Astrocyte of the cerebellum (primary cell): ENCODE measurements at regions of chr5 and their contacts with region 1.

Region 1: DNA sequence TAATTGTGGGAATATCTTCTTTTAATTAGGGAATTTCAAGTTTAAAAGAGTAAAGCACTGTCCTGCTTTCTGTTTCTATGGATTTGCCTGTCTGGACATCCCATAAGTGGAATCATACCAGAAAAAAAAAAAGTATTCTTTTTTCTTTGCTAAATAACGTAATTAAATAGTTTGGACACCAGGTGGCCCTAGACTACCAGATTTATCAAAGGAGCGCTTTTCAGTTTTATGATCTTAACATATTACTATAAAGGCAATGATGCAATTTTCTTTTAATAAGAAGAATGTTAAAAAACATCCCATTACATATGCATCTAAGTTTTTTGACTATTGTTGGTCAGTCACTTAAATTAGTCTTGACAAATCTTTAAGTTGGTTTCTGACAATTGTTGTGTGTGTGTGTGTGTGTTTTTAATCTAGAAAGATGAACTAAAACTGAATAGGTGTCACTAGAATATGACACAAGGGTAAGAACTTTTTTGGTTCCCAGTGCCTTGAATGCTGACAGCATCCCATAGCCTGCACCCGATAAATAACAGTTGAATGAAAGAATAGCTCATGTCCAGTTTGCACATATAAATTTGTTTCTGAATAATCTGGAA is 49.5 kb downstream of the C5orf22 start:
- DNase-seq: peak; percentile 42
- H3K4me3 ChIP-seq: no peak overlapping the region
- CTCF ChIP-seq: no peak

Region 2: DNA sequence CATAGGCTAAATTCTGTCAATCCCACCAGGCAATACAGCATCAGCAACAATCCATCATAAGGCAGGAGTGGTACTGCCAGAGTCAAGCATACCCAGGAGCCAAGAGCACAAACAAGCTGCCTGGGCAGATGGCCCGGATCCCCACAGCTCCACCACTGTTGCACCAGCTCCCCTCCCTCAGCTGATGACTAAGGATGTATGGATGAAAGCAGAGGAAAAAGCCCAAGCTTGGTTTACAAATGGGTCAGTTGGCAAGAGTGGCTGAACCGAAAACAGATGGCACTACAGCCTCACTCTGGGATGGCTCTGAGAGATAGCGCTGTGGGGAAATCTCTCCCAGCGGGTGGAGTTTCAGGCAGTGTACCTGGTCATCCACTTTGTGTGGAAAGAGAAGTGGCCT is 79.1 kb before region 1 on chr5:
- in situ Hi-C with region 1: no loop called
- DNase-seq: no peak
- H3K4me3 ChIP-seq: no peak overlapping the region
- CTCF ChIP-seq: no peak

Region 3: GRCh38 chr5:31531543-31531887 is 50.1 kb before region 1 on chr5:
- in situ Hi-C with region 1: no loop called
- DNase-seq: no peak
- H3K4me3 ChIP-seq: peak overlapping the region; percentile 70
- CTCF ChIP-seq: no peak

Region 4: GRCh38 chr5:31617867-31618266 is 36.3 kb after region 1 on chr5:
- in situ Hi-C with region 1: no loop called
- DNase-seq: no peak
- H3K4me3 ChIP-seq: no peak overlapping the region
- CTCF ChIP-seq: no peak

Region 5: GRCh38 chr5:31809050-31809870 is 227.7 kb after region 1 on chr5:
- in situ Hi-C with region 1: loop called (anchors 25 kb)
- DNase-seq: peak; percentile 66
- H3K4me3 ChIP-seq: no peak overlapping the region
- CTCF ChIP-seq: peak; percentile 80

Region 6: DNA sequence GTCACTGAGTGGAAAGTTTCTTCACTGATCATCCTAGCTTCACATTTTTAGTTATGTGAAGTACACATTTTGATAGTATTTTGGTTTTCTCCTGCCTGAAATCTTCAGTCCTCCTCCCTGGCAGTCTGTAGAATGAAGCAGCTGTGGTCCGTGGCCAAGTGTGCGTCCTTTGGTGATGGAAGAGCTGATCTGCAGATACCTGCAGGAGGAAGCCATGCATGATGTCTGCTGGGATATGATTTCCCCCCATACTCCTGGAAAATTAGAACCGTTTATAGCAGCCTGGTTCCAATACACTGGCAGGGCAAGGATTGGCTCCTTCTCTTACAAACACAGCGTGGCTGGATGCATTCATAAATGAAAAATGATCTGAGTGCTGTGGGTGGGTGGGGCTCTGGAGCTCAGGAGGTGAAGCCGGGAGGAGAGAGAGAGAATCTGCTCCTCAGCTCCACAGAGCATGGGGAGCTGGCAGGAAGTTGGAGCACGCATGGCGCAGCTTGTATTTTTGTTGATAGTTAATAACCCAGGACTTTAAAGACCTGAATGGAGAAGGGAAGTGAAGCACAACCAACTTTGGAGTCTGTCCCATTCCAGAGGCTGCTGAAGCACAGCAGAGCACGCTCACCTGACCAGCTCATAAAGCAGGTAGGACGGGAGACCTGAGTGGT is 354.2 kb after region 1 on chr5:
- in situ Hi-C with region 1: no loop called
- DNase-seq: no peak
- H3K4me3 ChIP-seq: no peak overlapping the region
- CTCF ChIP-seq: no peak